Calu3 (cell line): ENCODE measurements at regions of chr6 and their contacts with region 1.

Region 1: GRCh38 chr6:100460650-100461204 is 4.0 kb downstream of the SIM1 start:
- DNase-seq: peak; percentile 23
- H3K4me3 Mint-ChIP-seq: peak overlapping the region; percentile 86
- H3K27ac Mint-ChIP-seq: no peak overlapping the region
- H3K4me1 Mint-ChIP-seq: peaks cover 8% of the 10 kb centered on the region
- H3K27me3 Mint-ChIP-seq: no peaks in the 10 kb centered on the region
- CTCF ChIP-seq: peak; percentile 71

Region 2: DNA sequence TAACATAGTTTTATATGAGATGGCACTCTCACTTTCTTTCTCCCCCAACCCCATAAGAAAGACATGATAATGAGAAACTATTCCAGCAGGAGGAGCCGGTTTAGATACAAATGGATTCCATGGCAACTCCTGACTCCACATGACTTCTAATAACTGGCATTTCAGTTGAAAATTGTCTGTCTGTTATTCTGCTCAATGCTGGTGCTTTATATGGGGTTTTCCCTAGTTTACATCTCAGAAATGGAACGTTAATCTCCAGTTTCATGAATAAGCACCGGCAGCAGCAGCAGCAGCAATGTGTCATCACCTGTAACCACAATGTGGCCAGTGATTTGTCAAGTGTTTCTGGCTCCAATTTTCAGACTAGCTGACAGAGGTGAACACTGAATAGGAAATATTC is 11.9 kb after region 1 on chr6:
- CTCF ChIA-PET with region 1: interaction called, 10 read pairs
- intact Hi-C with region 1: no loop called
- DNase-seq: peak; percentile 34
- H3K4me3 Mint-ChIP-seq: no peak overlapping the region
- H3K27ac Mint-ChIP-seq: no peak overlapping the region
- H3K4me1 Mint-ChIP-seq: peaks cover 21% of the 10 kb centered on the region
- H3K27me3 Mint-ChIP-seq: no peaks in the 10 kb centered on the region
- CTCF ChIP-seq: no peak